Lower leg skin (tissue), 4 donors: ENCODE measurements at regions of chr11 and their contacts with region 1.

Region 1: DNA sequence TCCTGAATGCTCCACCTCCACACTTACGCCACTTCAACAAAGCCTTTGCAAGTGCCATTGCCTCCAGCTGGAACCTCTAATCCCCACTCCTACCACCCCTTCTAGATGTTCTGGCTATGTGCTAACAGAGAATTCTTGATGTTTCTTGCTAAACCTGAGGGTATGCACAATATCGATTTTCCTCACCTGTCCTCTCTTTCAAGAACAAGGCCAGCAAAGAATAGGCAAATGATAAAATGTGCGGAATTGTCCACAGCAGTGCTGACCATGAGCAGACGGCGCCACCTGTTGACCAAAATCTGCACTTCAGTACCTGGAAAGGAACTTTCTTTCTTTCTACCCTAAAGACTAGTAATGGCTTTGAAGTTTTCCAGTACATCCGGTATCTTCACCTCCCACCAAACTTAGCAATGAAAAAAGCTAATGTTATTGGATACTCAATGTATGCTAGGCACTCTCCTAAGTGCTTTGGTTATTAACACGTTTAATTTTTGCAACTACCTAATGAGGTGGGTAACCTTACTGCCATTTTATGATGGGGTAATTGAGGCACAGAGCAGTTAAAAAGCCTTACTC is 3.4 kb downstream of the TIMM10 start:
- DNase-seq: peak; percentile 71 to 92
- H3K4me3 ChIP-seq: no peak overlapping the region
- CTCF ChIP-seq: peak in 1 of 3 donors; percentile 82
- POLR2A ChIP-seq: no peak

Region 2: GRCh38 chr11:57345555-57346211 is 181.5 kb before region 1 on chr11:
- intact Hi-C with region 1: loop called (anchors 10 kb)
- DNase-seq: peak; percentile 68 to 92
- H3K4me3 ChIP-seq: no peak overlapping the region
- CTCF ChIP-seq: no peak
- POLR2A ChIP-seq: no peak

Region 3: DNA sequence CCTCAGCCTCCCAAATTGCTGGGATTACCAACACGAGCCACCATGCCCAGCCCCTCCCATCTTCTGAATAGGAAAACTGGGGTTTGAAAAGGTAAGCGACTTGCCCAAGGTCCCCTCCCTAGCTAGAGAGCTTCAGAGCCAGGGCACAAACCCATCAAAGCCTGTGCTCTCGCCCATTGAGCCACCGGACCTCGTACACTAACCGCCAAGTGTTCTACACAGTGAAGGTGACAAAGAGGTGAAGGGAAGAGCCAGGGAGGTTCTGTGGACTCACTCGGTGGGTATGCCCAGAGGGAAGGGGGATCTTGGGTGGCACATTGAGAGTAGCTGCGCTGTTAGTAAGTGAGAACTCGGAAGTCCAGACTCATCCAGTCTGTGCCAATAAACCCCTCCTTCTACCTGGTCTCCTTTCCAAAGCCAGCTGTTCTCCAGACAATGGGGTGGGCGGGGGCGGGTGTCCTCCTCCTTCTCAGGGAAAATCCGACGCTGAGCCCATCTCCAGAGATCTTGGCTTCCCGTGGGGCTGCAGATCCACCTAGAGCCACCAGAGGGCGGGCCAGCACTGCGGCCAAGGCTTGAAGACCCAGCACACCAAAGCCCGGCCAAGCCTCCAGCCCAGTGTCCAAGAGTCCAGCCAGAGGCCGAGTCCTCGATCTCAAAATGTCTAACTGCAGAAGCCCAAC is 70.0 kb before region 1 on chr11:
- intact Hi-C with region 1: loop called (anchors 5 kb)
- DNase-seq: peak; percentile 86 to 98
- H3K4me3 ChIP-seq: no peak overlapping the region
- CTCF ChIP-seq: peak in 1 of 3 donors; percentile 68
- POLR2A ChIP-seq: no peak